CD4-positive, alpha-beta memory T cell (primary cell): ENCODE measurements at regions of chr17 and their contacts with region 1.

Region 1: GRCh38 chr17:30124273-30124796 is 7.7 kb downstream of the NSRP1 start:
- DNase-seq: no peak
- H3K4me3 ChIP-seq: no peak overlapping the region
- H3K4me3 Mint-ChIP-seq: no peak overlapping the region
- H3K27ac ChIP-seq: no peak overlapping the region
- H3K27ac Mint-ChIP-seq: peak overlapping the region in 3 of 7 donors; percentile 10 to 83 (median 53)
- H3K4me1 ChIP-seq: peaks cover 20% of the 10 kb centered on the region
- H3K4me1 Mint-ChIP-seq: peaks cover 24 to 47% (median 34%) of the 10 kb centered on the region in 4 donors
- H3K27me3 ChIP-seq: no peaks in the 10 kb centered on the region
- H3K27me3 Mint-ChIP-seq: no peaks in the 10 kb centered on the region

Region 2: DNA sequence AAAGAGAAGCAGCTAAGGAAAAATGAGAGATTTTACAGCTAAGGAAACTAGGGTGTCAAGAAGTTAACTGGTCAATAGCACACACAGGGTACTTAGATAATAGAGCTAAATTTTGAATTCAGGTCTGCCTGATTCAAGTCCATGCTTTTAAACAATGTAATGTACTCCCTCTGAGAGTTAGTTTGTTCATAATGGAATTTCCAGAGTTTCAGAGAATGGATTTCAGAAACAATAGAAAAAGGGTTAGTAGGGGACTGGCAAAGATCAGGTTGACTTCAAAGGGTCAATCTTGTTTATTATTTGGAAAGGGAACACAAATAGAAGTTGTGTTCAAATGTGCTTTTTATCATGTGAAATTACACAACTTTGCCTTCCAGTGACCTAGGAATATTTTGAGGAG is 10.2 kb after region 1 on chr17:
- CTCF ChIA-PET with region 1: interaction called, 17 read pairs
- POLR2A ChIA-PET with region 1: no interaction called
- intact Hi-C with region 1: no loop called
- DNase-seq: no peak
- H3K4me3 ChIP-seq: no peak overlapping the region
- H3K4me3 Mint-ChIP-seq: no peak overlapping the region
- H3K27ac ChIP-seq: no peak overlapping the region
- H3K27ac Mint-ChIP-seq: peak overlapping the region in 2 of 7 donors; percentile 8 to 23
- H3K4me1 ChIP-seq: peaks cover 3% of the 10 kb centered on the region
- H3K4me1 Mint-ChIP-seq: peaks cover 20 to 28% (median 22%) of the 10 kb centered on the region in 4 donors
- H3K27me3 ChIP-seq: no peaks in the 10 kb centered on the region
- H3K27me3 Mint-ChIP-seq: no peaks in the 10 kb centered on the region

Region 3: DNA sequence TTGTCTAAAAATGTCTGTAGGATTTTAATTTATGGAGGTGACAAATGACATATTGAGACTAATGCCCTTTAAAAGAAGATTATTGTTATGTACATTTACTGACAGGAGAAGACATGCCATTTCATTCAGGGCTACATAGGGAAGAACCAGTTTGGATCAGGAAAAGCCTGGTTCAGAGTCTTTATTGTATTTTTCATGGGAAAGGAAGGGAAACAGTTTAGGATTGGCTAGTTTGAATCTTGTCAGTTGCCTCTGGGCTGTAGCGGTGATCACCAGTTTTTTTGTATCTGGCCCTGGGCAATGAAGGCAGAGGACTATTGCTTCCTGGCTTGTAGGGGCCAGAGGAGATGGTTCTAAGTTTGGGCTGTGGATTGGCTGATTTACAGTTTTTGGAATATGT is 24.0 kb after region 1 on chr17:
- CTCF ChIA-PET with region 1: interaction called, 24 read pairs
- POLR2A ChIA-PET with region 1: no interaction called
- intact Hi-C with region 1: no loop called
- DNase-seq: no peak
- H3K4me3 ChIP-seq: no peak overlapping the region
- H3K4me3 Mint-ChIP-seq: no peak overlapping the region
- H3K27ac ChIP-seq: no peak overlapping the region
- H3K27ac Mint-ChIP-seq: peak overlapping the region in 5 of 7 donors; percentile 3 to 67 (median 37)
- H3K4me1 ChIP-seq: no peaks in the 10 kb centered on the region
- H3K4me1 Mint-ChIP-seq: peaks cover 7 to 20% (median 18%) of the 10 kb centered on the region in 4 donors
- H3K27me3 ChIP-seq: no peaks in the 10 kb centered on the region
- H3K27me3 Mint-ChIP-seq: no peaks in the 10 kb centered on the region